Sciatic nerve (tissue), 2 donors: ENCODE measurements at regions of chr11 and their contacts with region 1.

Region 1: GRCh38 chr11:132024587-132025295 is 654.3 kb downstream of the NTM start:
- DNase-seq: no peak
- ATAC-seq: no peak

Region 2: DNA sequence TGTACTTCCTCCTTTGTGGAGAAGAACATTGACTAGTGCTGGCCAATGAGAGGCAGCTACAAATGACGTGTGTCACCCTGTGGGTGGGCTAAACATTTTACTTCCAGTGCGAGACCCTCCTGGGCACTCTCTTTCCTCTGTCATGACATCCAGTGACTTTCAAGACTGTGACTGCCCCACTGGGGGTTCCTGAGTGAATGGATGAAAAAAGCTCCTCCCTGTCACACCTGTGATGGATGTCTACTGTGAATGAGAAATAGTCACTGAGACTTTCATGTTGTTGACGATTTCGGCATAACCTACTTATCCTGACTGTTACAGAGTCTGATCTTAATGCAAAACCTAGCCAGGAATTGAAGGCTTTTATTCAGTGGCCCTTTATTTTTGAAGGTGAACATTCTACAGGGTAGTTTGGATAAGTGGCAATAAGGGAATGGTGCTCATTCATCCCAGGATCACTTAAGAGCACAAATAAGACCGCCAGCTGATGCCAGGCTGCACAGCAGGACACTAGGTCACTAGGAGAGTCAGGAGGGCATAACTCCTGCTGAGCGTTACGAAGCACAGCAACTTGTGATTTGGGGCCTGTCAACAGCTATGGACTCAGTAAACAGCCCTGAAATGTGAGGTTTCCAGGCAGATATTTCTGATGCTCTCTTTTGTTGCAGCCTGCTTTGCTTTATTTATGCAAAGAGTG is 17.7 kb before region 1 on chr11:
- intact Hi-C with region 1: loop called (anchors 1 kb)
- DNase-seq: no peak
- ATAC-seq: no peak